Heart left ventricle (tissue), 16 donors: ENCODE measurements at regions of chr6 and their contacts with region 1.

Region 1: GRCh38 chr6:108848116-108848868 is at the start of gene ARMC2:
- DNase-seq: peak; percentile 94 to 99 (median 96)
- ATAC-seq: peak; percentile 95 to 98 (median 96)
- H3K4me3 ChIP-seq: peak within 1 kb of the TSS; percentile 59 to 92 (median 76)
- H3K27ac ChIP-seq: peak within 1 kb of the TSS; percentile 66 to 94 (median 88)
- H3K4me1 ChIP-seq: peaks cover 0 to 58% (median 29%) of the 10 kb centered on the region in 12 donors
- H3K27me3 ChIP-seq: no peaks in the 10 kb centered on the region
- CTCF ChIP-seq: peak in 2 of 12 donors; percentile 10 to 14
- POLR2A ChIP-seq: peak; percentile 66
- total RNA-seq, gene ARMC2: 5.7 to 18.0 (median 10.2) TPM

Region 2: DNA sequence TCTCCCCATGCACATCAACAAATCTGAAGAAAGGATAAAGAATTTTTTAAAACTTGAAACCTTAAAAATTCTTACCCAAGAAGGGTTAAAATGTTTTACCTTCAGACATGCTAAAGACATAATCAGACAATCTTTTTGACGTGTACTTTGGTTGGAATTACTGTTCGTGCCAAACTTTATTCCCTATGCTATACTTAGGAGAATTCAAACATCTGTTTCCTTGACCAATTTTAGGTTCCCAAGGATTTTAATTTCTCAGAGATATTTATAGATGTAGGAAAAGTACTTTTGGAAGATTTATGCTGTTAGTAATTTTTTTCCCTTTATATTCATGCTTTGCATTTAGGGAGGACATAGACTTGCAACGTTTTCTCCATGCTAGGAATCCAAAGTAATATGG is 445.1 kb before region 1 on chr6:
- intact Hi-C with region 1: no loop called
- DNase-seq: no peak
- ATAC-seq: no peak
- H3K4me3 ChIP-seq: no peak overlapping the region
- H3K27ac ChIP-seq: peak overlapping the region in 4 of 12 donors; percentile 0 to 43 (median 26)
- H3K4me1 ChIP-seq: peaks cover 0 to 17% (median 5%) of the 10 kb centered on the region in 12 donors
- H3K27me3 ChIP-seq: no peaks in the 10 kb centered on the region
- CTCF ChIP-seq: no peak
- POLR2A ChIP-seq: no peak

Region 3: GRCh38 chr6:108874470-108875160 is 26.3 kb after region 1 on chr6:
- intact Hi-C with region 1: loop called in 2 of 10 experiments (anchors 2 kb)
- DNase-seq: no peak
- ATAC-seq: peak in 1 of 4 donors; percentile 24
- H3K4me3 ChIP-seq: peak overlapping the region in 1 of 12 donors; percentile 18
- H3K27ac ChIP-seq: peak overlapping the region in 11 of 12 donors; percentile 31 to 93 (median 75)
- H3K4me1 ChIP-seq: peaks cover 0 to 69% (median 50%) of the 10 kb centered on the region in 12 donors
- H3K27me3 ChIP-seq: no peaks in the 10 kb centered on the region
- CTCF ChIP-seq: no peak
- POLR2A ChIP-seq: no peak

Region 4: GRCh38 chr6:108888745-108889144 is 40.5 kb after region 1 on chr6:
- intact Hi-C with region 1: loop called in 4 of 10 experiments (anchors 5 kb)
- DNase-seq: no peak
- ATAC-seq: peak in 3 of 4 donors; percentile 16 to 39 (median 31)
- H3K4me3 ChIP-seq: no peak overlapping the region
- H3K27ac ChIP-seq: peak overlapping the region in 1 of 12 donors; percentile 52
- H3K4me1 ChIP-seq: peaks cover 0 to 24% (median 9%) of the 10 kb centered on the region in 12 donors
- H3K27me3 ChIP-seq: no peaks in the 10 kb centered on the region
- CTCF ChIP-seq: no peak
- POLR2A ChIP-seq: no peak

Region 5: DNA sequence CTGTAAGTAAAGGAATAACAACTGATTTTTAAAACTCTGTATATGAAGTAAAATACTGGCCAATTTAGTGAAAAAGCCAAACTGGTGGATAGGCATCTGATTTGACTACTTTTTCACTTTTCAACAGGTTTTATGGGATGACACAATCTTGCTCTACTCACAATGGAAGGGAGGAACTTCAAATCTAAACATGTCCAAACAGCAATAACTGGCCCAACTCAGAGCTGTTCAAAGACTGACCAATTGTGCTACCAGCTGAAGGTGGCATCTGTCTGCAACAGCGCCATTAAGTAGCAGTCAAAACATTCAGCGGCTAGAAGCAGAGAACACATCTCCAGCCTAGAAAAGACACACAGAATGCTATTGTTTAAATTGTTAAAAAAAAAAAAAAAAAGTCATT is 201.7 kb after region 1 on chr6:
- intact Hi-C with region 1: no loop called
- DNase-seq: no peak
- ATAC-seq: no peak
- H3K4me3 ChIP-seq: no peak overlapping the region
- H3K27ac ChIP-seq: peak overlapping the region in 1 of 12 donors; percentile 12
- H3K4me1 ChIP-seq: peaks cover 0 to 54% (median 29%) of the 10 kb centered on the region in 12 donors
- H3K27me3 ChIP-seq: no peaks in the 10 kb centered on the region
- CTCF ChIP-seq: no peak
- POLR2A ChIP-seq: no peak

Region 6: DNA sequence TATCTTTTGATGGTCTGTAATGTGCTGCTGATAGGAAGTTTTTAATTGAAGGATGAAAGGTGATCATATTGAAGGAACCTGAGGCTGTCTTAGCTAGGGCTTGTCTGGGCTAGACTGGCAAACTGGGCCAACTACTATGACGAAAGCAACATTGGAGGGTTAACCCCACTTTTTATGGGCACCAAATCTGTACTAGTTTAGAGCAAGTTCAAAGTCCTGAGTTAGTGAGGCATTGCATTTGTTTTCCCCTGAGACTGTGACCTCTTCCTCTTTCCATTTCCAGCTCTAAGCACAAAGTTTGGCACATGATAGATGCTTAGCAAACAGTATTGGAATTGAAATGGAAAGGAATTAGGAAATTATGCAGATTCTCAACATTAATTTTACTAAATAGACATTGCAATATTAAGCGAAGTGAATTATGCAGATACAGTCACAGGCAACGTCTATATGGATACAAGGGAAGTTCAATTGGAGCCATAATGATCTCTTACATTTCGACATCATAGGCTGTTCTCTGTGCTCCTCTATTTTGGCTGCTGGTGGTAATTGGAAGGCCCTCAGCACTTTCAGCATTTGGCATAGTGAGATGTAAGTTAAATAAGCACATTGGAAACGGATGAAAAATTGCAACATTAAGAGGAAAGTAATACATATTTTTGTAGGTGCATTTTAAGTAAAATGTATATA is 269.2 kb after region 1 on chr6:
- intact Hi-C with region 1: no loop called
- DNase-seq: peak in 1 of 5 donors; percentile 19
- ATAC-seq: peak in 1 of 4 donors; percentile 20
- H3K4me3 ChIP-seq: no peak overlapping the region
- H3K27ac ChIP-seq: peak overlapping the region in 1 of 12 donors; percentile 50
- H3K4me1 ChIP-seq: peaks cover 0 to 49% (median 30%) of the 10 kb centered on the region in 12 donors
- H3K27me3 ChIP-seq: no peaks in the 10 kb centered on the region
- CTCF ChIP-seq: no peak
- POLR2A ChIP-seq: no peak